Upper lobe of right lung (tissue), 1 donor: ENCODE measurements at regions of chr3 and their contacts with region 1.

Region 1: GRCh38 chr3:42547401-42547945 is 34.3 kb downstream of the SEC22C start:
- DNase-seq: peak; percentile 88
- ATAC-seq: peak; percentile 68
- H3K4me3 ChIP-seq: no peak overlapping the region
- H3K27ac ChIP-seq: no peak overlapping the region
- H3K4me1 ChIP-seq: peaks cover 40% of the 10 kb centered on the region
- H3K27me3 ChIP-seq: no peaks in the 10 kb centered on the region
- CTCF ChIP-seq: peak; percentile 99

Region 2: DNA sequence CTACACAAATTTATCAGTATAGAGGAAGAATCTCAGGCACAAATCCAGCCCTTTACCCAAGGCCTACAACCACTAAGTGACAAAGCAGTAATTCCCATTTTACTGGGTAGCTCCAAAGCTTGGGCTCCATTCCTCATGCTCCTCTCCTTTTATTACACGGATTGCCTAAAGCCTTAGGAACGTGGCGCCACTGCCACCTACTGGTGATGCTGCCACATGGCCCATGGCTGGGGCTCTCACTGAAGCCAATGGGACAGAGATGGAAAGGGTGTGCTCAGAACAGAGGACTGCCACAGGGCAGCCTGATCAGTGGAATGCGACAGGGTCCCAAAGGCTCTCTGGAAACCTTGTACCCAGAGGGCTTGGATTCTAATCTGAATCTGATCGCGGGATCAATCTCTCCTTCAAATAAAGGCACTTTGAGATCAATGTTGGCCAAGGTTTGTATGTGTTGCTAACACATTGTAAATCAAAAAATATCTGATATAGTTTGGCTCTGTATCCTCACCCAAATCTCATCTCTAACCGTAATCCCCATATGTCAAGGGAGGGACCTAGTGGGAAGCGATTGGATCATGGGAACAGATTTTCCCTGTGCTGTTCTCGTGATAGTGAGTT is 103.5 kb before region 1 on chr3:
- intact Hi-C with region 1: no loop called
- DNase-seq: peak; percentile 91
- ATAC-seq: peak; percentile 96
- H3K4me3 ChIP-seq: no peak overlapping the region
- H3K27ac ChIP-seq: no peak overlapping the region
- H3K4me1 ChIP-seq: no peaks in the 10 kb centered on the region
- H3K27me3 ChIP-seq: peaks cover 5% of the 10 kb centered on the region
- CTCF ChIP-seq: peak; percentile 99

Region 3: GRCh38 chr3:42502429-42503250 is 44.8 kb before region 1 on chr3 and contains the start of gene VIPR1:
- intact Hi-C with region 1: loop called (anchors 5 kb)
- DNase-seq: peak; percentile 95
- ATAC-seq: peak; percentile 93
- H3K4me3 ChIP-seq: peak within 1 kb of the TSS; percentile 60
- H3K27ac ChIP-seq: peak within 1 kb of the TSS; percentile 76
- H3K4me1 ChIP-seq: peaks cover 19% of the 10 kb centered on the region
- H3K27me3 ChIP-seq: no peaks in the 10 kb centered on the region
- CTCF ChIP-seq: no peak
- total RNA-seq, gene VIPR1: 184 TPM